Sigmoid colon (tissue), 7 donors: ENCODE measurements at regions of chr3 and their contacts with region 1.

Region 1: DNA sequence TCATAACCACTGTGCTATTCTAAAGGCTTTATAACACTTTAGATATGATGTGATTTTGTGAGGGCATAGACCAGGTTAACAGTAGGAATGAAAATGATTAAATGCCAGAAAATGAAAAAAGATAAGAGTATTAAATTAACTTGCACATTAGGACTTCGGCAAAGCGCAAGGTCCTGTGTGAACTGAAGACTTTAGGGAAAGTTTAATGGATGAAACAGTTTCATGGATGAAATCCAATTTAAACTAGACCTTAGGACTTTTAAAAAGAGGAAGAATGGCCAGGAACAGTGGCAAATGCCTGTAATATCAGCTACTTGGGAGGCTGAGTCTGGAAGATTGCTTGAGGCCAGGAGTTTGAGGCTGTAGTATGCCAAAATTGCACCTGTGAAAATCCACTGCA is 8.7 kb downstream of the SLMAP start:
- DNase-seq: no peak
- H3K4me3 ChIP-seq: no peak overlapping the region
- H3K27ac ChIP-seq: no peak overlapping the region
- H3K4me1 ChIP-seq: peaks cover 0 to 36% (median 22%) of the 10 kb centered on the region in 4 donors
- H3K27me3 ChIP-seq: no peaks in the 10 kb centered on the region
- CTCF ChIP-seq: no peak
- EP300 ChIP-seq: no peak
- POLR2A ChIP-seq: no peak

Region 2: GRCh38 chr3:57826245-57826951 is 61.6 kb after region 1 on chr3:
- intact Hi-C with region 1: loop called (anchors 5 kb)
- DNase-seq: no peak
- H3K4me3 ChIP-seq: no peak overlapping the region
- H3K27ac ChIP-seq: no peak overlapping the region
- H3K4me1 ChIP-seq: peaks cover 0 to 48% (median 27%) of the 10 kb centered on the region in 4 donors
- H3K27me3 ChIP-seq: no peaks in the 10 kb centered on the region
- CTCF ChIP-seq: no peak
- EP300 ChIP-seq: no peak
- POLR2A ChIP-seq: no peak

Region 3: DNA sequence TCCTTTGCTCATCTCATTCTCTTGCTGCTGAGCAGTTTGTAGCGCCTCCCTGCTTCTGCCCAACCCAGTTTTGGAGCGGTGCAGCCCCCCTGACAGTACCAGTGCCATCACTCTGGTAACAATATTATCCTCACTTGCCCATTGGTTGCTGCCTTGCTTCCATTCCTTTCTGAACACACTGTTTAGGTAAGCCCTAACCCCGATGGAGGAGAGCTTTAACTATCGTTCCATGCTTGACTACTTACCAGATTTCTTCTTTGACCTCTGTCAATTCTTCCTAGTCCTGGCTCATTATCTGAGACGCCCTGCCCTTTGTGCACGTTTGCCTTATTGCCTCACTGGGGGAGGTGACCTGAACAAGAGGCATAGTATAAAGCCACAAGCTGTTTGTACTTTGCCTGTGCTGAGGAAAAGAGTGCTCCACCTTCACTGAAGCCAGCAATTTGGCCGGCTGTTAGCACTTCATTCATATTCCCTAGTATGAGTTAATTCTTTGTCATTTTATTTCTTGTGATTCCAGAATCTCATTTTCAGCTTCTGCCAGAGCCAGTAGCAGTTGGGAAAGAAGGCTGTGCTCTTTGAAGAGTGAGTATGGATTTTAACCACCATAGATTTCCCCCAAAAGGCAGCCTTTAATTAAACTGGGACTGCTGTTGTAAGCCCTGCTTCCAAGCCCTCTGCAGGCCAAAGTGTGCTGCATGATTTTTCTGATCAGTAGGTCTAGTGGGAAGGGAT is 484.7 kb after region 1 on chr3:
- intact Hi-C with region 1: no loop called
- DNase-seq: no peak
- H3K4me3 ChIP-seq: no peak overlapping the region
- H3K27ac ChIP-seq: peak overlapping the region in 1 of 4 donors; percentile 36
- H3K4me1 ChIP-seq: peaks cover 0 to 77% (median 63%) of the 10 kb centered on the region in 4 donors
- H3K27me3 ChIP-seq: no peaks in the 10 kb centered on the region
- CTCF ChIP-seq: no peak
- EP300 ChIP-seq: no peak
- POLR2A ChIP-seq: no peak